Activated T-helper 1 cell treated with anti-CD3 and anti-CD28 coated beads, Interleukin-12 subunit alpha, Interleukin-12 subunit beta, Interleukin-2, Interleukin-4 antibody, amounts not matched to agents 30 ng/mL and 10 ng/mL and 1 ng/mL, durations not matched to agents 14 hours and 24 hours and 36 hours (primary cell): ENCODE measurements at regions of chr4 and their contacts with region 1.

Region 1: DNA sequence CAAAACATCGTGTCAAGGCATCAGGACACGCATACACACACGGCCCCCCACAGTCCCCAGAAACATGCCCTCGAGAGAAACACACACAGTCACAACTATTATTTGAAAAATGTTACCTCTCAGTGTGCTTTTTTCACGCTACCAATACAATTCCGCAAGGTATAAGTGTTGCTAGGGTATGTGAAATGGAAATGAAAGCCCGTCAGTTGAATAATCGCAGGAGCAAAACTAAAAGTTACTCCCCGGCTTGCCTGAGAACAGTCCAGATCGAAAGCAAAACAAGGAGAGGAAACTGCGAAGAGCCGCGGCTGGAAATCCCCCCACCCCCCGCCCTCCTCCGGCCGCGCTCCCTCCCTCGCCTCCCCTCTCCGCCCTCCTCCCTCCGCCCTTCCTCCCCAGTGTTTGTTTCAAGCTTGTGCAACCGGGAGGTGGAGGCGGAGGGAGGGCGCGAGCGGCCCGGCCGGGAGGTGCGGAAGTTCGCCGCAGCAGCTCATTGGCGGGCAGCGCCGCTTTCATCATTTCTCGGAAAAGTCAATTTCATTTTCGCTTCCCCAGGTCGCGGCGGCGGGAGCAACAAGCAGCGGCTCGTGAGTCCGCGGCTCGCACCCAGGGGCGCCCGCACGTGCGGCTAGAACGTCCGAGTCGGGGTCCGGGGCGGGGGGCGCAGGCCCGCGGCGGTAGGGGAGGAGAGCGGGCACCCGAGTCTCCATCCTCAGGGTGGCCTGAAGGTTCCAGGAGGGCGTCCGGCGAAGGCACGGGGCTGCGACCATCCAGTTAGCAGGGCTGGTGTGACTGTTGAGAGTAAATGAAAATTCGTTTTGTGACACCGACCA is at the start of gene IRF2:
- DNase-seq: peak; percentile 94
- H3K4me3 Mint-ChIP-seq: peak within 1 kb of the TSS; percentile 97
- H3K27ac Mint-ChIP-seq: peak within 1 kb of the TSS; percentile 96
- H3K4me1 Mint-ChIP-seq: peaks cover 64% of the 10 kb centered on the region
- H3K27me3 Mint-ChIP-seq: no peaks in the 10 kb centered on the region
- total RNA-seq, gene IRF2: 64.2 and 75.8 TPM in 2 replicates

Region 2: DNA sequence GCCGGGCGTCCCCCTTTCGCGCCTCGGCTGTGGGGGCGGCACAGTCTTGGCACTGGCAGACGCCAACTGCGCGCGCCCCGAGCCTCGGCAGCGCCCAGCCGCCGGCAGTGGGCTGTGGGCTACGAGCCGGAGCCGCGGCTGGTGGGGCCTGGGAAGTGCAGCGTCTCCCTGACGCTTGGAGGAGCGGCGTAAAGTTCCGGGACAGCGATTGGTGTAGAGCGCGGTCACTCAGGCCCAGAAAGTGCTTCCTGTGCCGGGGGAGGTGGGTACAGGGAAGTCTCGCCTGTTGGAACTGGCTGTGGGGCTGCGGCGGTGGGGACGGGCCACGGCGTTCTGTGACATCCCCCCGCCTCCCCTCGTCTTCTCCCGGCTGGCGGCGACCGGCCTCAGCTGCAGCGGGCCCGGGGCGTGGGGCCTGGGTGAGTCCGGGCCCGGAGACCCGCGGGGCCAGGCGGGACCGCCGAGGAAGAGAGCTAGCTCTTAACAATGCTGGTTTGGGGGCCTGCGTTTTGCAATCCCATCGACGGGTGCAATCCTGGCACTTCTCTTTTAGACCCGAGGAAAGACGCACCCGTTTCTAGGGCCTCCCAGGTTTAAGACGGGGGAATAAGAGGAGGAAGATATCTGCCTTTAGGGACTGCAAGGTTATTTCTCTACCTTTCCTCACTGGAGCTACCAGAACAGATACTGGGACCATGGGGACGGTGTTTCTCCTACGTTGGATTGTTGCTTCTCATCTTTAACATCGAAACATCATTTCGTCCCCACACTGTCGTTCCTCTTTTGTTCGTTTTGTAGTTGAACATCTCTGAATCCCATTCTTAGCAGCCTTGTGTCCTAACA is 815.2 kb before region 1 on chr4 and contains the starts of genes RWDD4 and TRAPPC11:
- intact Hi-C with region 1: loop called (anchors 1 kb)
- DNase-seq: peak; percentile 95
- H3K4me3 Mint-ChIP-seq: peak within 1 kb of the TSS; percentile 100
- H3K27ac Mint-ChIP-seq: peak within 1 kb of the TSS; percentile 96
- H3K4me1 Mint-ChIP-seq: peaks cover 32% of the 10 kb centered on the region
- H3K27me3 Mint-ChIP-seq: no peaks in the 10 kb centered on the region
- total RNA-seq, gene RWDD4: 23.9 and 24.2 TPM in 2 replicates
- total RNA-seq, gene TRAPPC11: 23.0 and 33.7 TPM in 2 replicates

Region 3: DNA sequence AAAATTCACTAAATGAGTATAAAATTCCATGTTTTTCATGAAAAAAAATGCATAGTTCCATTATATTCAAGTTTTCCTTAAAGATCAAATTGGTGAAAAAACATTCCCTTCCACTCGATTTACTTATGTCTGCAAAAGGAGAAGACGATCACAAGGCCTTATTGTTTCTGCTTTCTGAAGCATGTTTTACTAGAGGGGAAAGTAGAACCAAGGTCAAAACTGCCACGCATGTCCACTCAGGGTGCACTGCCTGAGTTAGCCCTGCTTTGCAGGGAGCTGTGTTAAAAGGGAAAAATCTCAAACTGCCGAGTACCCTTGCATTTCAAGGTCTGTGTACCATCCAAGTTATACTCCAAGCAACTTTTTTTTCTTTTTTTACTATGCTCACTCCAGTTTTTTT is 758.2 kb before region 1 on chr4:
- intact Hi-C with region 1: no loop called
- DNase-seq: no peak
- H3K4me3 Mint-ChIP-seq: no peak overlapping the region
- H3K27ac Mint-ChIP-seq: no peak overlapping the region
- H3K4me1 Mint-ChIP-seq: peaks cover 2% of the 10 kb centered on the region
- H3K27me3 Mint-ChIP-seq: peaks cover 18% of the 10 kb centered on the region

Region 4: GRCh38 chr4:184282251-184282713 is 192.2 kb before region 1 on chr4:
- intact Hi-C with region 1: loop called (anchors 1 kb)
- DNase-seq: peak; percentile 53
- H3K4me3 Mint-ChIP-seq: peak overlapping the region; percentile 50
- H3K27ac Mint-ChIP-seq: peak overlapping the region; percentile 87
- H3K4me1 Mint-ChIP-seq: peaks cover 75% of the 10 kb centered on the region
- H3K27me3 Mint-ChIP-seq: no peaks in the 10 kb centered on the region

Region 5: GRCh38 chr4:184318852-184319251 is 155.6 kb before region 1 on chr4:
- intact Hi-C with region 1: loop called (anchors 1 kb)
- DNase-seq: no peak
- H3K4me3 Mint-ChIP-seq: peak overlapping the region; percentile 23
- H3K27ac Mint-ChIP-seq: peak overlapping the region; percentile 89
- H3K4me1 Mint-ChIP-seq: peaks cover 71% of the 10 kb centered on the region
- H3K27me3 Mint-ChIP-seq: no peaks in the 10 kb centered on the region

Region 6: GRCh38 chr4:184448821-184449220 is 25.7 kb before region 1 on chr4:
- intact Hi-C with region 1: no loop called
- DNase-seq: no peak
- H3K4me3 Mint-ChIP-seq: peak overlapping the region; percentile 64
- H3K27ac Mint-ChIP-seq: peak overlapping the region; percentile 66
- H3K4me1 Mint-ChIP-seq: peaks cover 79% of the 10 kb centered on the region
- H3K27me3 Mint-ChIP-seq: no peaks in the 10 kb centered on the region

Region 7: DNA sequence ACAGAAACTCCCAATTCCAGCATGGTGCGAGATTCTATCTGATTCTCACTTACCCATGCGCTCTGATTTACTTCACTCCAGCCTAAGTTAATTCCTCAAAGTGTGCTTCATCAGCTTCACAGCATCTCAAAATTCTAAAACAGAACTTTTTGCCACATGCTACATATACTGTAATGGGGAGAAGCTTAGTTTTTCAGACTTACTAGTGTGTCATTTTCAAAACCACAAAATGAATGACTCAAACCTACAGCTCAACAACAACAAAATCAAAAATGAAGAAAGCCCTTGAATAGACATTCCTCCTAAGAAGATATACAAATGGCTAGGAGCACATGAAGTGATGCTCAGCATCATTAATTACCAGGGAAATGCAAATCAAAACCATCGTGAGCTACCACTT is 15.1 kb before region 1 on chr4:
- intact Hi-C with region 1: loop called (anchors 1 kb)
- DNase-seq: no peak
- H3K4me3 Mint-ChIP-seq: peak overlapping the region; percentile 35
- H3K27ac Mint-ChIP-seq: peak overlapping the region; percentile 83
- H3K4me1 Mint-ChIP-seq: peaks cover 82% of the 10 kb centered on the region
- H3K27me3 Mint-ChIP-seq: no peaks in the 10 kb centered on the region

Region 8: GRCh38 chr4:184514121-184514988 is 39.9 kb after region 1 on chr4:
- intact Hi-C with region 1: loop called (anchors 1 kb)
- DNase-seq: peak; percentile 56
- H3K4me3 Mint-ChIP-seq: peak overlapping the region; percentile 46
- H3K27ac Mint-ChIP-seq: peak overlapping the region; percentile 93
- H3K4me1 Mint-ChIP-seq: peaks cover 56% of the 10 kb centered on the region
- H3K27me3 Mint-ChIP-seq: no peaks in the 10 kb centered on the region